ENCODE measurements at regions of chr3 and their contacts with region 1.

Region 1: GRCh38 chr3:172522871-172523818 is at the start of gene TNFSF10:
- DNase-seq: peak; percentile 79
- H3K4me3 Mint-ChIP-seq: peak within 1 kb of the TSS; percentile 88
- H3K27ac Mint-ChIP-seq: peak within 1 kb of the TSS; percentile 91
- H3K4me1 Mint-ChIP-seq: peaks cover 59% of the 10 kb centered on the region
- H3K27me3 Mint-ChIP-seq: no peaks in the 10 kb centered on the region
- total RNA-seq, gene TNFSF10: 119 and 123 TPM in 2 replicates

Region 2: DNA sequence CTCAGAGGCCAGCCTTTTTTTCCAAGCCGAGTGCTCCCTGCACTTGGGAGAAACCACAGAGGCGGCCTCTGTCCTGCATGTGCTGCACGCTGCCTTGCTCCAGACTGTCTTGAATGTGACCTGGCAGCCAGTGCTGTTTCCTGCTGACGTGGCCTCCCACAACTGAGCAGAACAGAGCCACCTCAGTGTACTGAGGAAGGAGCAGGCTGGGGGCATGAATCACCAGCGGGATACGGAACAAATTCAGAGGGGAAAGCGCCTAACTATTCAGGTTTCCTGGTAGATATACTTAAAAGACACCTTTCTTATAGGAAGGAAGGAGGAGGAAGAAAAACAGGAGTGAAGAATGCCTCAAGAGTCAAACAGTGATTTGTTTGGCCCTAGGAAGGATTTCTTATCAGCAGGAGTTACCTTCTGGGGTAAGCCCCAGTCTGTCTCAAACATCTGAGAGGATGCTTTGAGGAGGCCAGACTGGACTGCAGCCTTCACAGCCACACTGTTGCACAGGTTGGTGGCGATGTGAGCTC is 369.7 kb before region 1 on chr3:
- intact Hi-C with region 1: no loop called
- DNase-seq: peak; percentile 29
- H3K4me3 Mint-ChIP-seq: no peak overlapping the region
- H3K27ac Mint-ChIP-seq: peak overlapping the region; percentile 65
- H3K4me1 Mint-ChIP-seq: peaks cover 32% of the 10 kb centered on the region
- H3K27me3 Mint-ChIP-seq: no peaks in the 10 kb centered on the region

Region 3: DNA sequence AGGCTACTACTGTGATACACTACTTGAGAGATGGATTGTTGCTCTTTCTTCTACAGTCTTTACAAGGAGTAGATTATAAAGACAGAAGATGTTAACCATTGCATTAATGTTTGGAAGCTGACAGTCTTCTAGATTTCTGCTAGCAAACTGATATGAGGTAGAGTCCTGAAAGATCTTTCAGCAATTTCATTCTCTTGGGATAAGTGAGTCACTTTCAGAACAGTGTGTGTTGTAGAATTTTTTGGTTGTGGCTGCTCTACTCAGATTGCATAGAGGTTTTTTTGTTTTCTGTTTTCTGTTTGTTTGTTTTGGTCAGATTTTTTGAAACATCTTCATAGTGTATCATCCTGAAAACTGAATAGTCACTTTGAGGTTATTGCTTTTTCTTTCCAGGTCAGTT is 17.1 kb before region 1 on chr3:
- intact Hi-C with region 1: loop called (anchors 2 kb)
- DNase-seq: no peak
- H3K4me3 Mint-ChIP-seq: peak overlapping the region; percentile 16
- H3K27ac Mint-ChIP-seq: peak overlapping the region; percentile 83
- H3K4me1 Mint-ChIP-seq: peaks cover 57% of the 10 kb centered on the region
- H3K27me3 Mint-ChIP-seq: no peaks in the 10 kb centered on the region

Region 4: GRCh38 chr3:172511783-172512762 is 11.1 kb before region 1 on chr3:
- intact Hi-C with region 1: loop called (anchors 1 kb)
- DNase-seq: peak; percentile 69
- H3K4me3 Mint-ChIP-seq: peak overlapping the region; percentile 43
- H3K27ac Mint-ChIP-seq: peak overlapping the region; percentile 88
- H3K4me1 Mint-ChIP-seq: peaks cover 98% of the 10 kb centered on the region
- H3K27me3 Mint-ChIP-seq: no peaks in the 10 kb centered on the region

Region 5: DNA sequence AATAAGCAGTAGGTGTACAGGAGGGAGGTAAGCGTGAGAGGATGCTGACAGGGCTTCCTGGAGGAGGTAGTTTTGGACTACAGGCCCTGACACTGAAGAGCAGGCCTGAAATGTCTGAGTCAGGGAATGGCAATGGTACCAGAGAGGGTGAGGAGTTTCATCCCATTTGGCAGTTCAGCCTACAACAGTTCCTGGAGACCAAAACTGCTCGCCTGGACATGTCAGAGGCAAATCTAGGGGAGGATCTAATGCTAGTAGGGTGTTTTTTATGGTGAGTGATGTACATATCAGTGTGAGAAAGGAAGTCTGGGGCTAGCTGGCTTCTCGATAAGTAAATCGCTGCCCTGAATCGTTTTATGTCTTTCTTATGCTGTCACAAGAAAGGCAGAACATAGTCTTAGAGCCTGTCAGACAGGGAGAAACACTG is 13.9 kb after region 1 on chr3:
- intact Hi-C with region 1: loop called (anchors 2 kb)
- DNase-seq: no peak
- H3K4me3 Mint-ChIP-seq: peak overlapping the region; percentile 62
- H3K27ac Mint-ChIP-seq: peak overlapping the region; percentile 95
- H3K4me1 Mint-ChIP-seq: peaks cover 68% of the 10 kb centered on the region
- H3K27me3 Mint-ChIP-seq: no peaks in the 10 kb centered on the region

Region 6: DNA sequence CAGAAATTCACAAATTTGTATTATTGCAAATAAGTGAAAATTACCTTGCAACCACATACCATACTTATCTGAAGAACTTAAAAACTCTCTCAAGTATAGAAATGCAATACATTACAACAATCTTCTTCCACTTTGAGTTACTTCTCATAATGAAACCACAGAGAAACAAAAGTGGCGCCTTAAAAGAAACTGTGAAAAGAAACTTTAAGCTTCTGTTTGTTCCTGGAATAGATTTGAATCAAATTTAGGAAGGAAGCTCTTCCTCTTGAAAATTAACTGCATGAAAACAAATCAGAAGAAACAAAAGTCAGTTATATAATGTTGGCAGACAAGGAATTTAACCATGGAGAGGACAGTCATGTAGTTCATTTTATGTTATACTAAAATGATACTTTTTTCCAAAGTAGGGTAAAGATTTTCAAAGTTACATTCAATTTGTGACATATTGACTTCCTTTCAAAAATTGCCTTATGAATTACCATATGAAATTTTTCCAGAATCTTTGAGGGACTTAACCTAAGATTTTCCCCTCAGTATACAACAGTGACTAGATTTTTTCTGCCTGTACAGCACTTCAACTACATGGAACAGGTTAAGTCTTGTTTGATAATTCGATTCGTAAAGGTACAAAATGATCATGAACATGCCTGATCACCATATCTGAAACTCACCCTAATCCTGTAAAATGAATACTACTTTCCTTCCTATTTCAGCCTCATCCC is 57.7 kb after region 1 on chr3:
- intact Hi-C with region 1: loop called (anchors 1 kb)
- DNase-seq: no peak
- H3K4me3 Mint-ChIP-seq: peak overlapping the region; percentile 79
- H3K27ac Mint-ChIP-seq: peak overlapping the region; percentile 88
- H3K4me1 Mint-ChIP-seq: peaks cover 97% of the 10 kb centered on the region
- H3K27me3 Mint-ChIP-seq: no peaks in the 10 kb centered on the region

Region 7: DNA sequence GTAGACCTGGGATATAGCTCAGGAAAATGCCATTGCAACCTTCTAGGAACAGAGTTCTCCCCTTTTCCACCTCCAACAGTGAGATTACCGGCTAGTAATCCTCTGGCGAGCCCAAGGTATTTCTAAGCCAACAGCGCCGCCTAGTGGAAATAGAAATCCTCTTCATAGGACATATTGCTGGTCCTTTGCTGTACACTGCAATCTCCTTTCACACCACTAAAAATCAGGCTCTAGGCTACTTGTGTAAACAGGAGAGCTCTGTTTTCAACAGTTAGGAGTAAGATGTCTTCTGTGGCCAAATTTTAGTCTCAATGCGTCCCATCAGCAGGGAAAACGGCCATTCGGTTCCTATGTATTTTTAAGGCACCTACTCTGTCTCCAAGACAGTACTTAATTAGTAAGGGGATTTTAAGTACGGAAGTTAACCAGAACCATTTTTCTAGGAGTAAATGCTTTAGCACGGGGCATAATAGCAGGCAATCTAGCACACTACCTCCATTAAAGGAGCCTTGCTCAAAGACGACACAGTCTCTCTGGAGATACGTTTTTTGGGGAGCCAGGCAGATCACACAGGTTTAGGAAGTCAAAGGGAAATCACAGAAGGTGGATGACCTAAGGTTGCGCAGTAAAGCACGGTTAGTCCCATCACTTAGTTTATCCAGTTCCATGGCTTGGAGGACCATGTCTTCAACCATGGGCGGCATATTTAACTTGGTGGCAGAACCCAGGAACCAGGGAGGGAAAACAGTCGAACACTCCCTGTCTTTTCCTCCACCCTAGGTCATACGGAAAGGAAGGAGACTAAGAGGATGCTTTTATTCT is 143.9 kb after region 1 on chr3:
- intact Hi-C with region 1: no loop called
- DNase-seq: peak; percentile 70
- H3K4me3 Mint-ChIP-seq: peak overlapping the region; percentile 43
- H3K27ac Mint-ChIP-seq: no peak overlapping the region
- H3K4me1 Mint-ChIP-seq: peaks cover 20% of the 10 kb centered on the region
- H3K27me3 Mint-ChIP-seq: no peaks in the 10 kb centered on the region